Ascending aorta (tissue), 2 donors: ENCODE measurements at regions of chr20 and their contacts with region 1.

Region 1: DNA sequence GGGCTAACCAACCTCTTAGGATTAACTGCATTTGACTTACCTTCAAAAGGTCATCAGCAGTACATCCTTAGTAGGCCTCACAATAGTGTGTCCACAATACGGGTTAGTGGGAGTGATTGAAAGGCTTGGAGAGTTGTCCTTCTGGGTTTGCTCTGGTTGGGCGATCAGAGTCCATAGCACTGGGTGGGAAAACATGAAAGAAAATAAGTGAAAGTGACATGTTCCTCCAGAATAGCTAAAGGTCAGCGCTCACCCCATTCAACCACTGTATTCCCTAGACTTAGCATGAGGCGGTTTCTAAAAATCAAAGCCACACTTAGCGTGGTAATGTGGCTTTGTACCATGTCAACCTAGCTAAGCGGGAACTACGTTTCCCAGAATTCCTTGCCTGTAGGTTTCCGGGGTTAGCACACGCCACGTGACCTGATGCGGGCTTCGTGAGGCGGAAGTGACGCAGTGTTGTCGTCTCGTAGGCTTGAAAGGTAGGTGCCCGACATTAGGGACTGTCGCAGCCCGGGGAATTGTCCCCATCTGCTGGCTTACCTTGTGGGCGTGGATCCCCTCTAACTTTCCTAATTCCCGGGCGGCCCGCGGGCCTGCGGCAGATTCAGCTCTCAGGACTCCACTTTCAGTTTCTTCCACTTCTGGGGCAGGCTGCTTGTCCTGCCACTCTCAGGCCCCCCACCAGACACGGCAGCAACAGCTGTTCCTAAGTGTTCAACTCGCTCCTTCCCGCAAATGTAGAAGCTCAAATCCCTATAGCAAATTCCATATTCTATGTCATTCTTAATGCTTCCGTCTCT is 19.8 kb upstream of the SCP2D1 start:
- DNase-seq: peak; percentile 71 to 94
- H3K4me3 ChIP-seq: peak overlapping the region; percentile 63 to 79
- H3K27ac ChIP-seq: peak overlapping the region; percentile 78 to 80
- H3K4me1 ChIP-seq: peaks cover 0 to 3% of the 10 kb centered on the region in 2 donors
- H3K27me3 ChIP-seq: no peaks in the 10 kb centered on the region
- CTCF ChIP-seq: peak in 1 of 3 experiments; percentile 17

Region 2: DNA sequence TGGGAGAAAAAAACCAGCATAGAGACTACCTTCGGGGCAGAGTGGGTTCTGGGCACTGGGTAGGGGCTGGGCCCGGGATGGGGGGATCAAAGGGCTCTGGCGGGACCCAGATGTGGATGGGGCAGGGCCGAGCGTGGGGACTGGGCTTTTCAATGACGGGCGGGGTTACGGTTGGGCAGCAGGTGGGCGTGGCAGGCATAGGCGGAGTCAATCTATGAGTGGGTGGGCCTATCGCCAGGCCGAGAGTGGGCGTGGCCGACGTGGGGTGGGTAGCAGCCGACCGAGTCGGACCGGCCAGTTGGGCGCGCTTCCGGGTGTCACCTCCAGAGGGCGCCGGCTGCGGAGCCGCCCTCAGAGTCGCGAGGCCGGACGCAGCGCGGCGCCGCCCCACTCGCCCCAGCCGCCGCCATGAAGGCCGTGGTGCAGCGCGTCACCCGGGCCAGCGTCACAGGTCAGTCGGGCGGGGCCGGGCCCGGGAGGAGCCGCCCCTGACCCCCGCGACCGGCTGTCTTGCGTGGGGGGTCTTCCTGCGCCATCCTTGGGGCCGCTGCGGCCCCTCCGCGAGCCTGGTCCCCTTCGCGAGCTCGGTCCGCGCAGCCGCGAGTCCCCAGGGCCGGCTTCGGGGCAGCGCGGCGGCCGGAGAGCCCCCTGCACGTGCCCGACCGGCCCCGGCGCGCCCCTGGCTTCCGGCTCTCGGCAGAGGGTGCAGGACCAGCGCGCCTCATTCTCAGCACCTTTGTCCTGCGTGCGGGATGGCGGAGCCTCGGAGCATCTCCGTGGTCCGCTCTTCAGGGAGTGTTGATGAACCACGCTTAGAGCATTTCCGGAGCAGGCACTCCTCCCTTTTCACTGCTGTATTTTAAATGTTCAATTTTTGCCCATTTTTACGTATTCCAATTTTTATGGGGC is 205.9 kb before region 1 on chr20 and contains the start of gene DTD1:
- intact Hi-C with region 1: loop called (anchors 2 kb)
- DNase-seq: peak; percentile 67 to 97
- H3K4me3 ChIP-seq: peak within 1 kb of the TSS; percentile 83 to 98
- H3K27ac ChIP-seq: peak within 1 kb of the TSS; percentile 75 to 83
- H3K4me1 ChIP-seq: peaks cover 0 to 15% of the 10 kb centered on the region in 2 donors
- H3K27me3 ChIP-seq: no peaks in the 10 kb centered on the region
- CTCF ChIP-seq: peak; percentile 65 to 67 (median 66)
- total RNA-seq, gene DTD1: 34.9 TPM

Region 3: DNA sequence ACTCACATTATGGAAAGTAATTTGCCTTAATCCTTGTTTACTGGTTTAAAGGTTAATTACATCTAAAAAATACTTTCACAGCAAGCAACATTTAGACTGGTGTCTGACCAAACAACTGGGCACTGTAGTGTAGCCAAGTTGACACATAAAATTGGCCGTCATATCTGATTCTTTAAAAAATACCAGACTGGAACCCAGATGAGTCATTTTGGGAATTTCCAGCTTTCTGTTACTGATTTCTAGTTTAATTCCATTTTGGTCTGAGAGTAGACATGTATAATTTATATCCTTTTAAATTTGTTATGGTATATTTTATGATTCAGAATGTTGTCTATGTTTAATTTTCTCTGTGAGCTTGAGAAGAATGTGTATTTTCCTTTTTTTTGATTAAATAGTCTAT is 63.8 kb after region 1 on chr20:
- intact Hi-C with region 1: loop called (anchors 5 kb)
- DNase-seq: no peak
- H3K4me3 ChIP-seq: no peak overlapping the region
- H3K27ac ChIP-seq: peak overlapping the region; percentile 83 to 84
- H3K4me1 ChIP-seq: peaks cover 0 to 10% of the 10 kb centered on the region in 2 donors
- H3K27me3 ChIP-seq: no peaks in the 10 kb centered on the region
- CTCF ChIP-seq: no peak

Region 4: DNA sequence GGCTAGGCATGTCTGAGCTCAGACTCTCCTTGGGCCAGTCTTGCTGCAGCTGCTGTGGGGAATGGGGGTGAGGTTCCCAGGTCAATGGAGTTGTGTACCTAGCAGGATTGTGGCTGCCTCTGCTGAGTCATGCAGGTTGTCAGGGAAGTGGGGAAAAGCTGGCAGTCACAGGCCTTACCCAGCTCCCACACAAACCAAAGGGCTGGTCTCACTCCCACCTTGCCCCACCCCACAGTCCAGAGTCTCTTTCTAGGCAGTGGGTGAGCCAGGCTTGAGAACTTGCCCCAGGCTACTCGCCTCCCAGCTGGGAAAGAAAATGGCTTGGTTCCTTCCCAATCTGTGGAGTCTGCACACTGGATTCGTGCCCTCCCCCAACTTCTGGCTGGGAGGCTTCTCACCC is 85.4 kb after region 1 on chr20:
- intact Hi-C with region 1: no loop called
- DNase-seq: no peak
- H3K4me3 ChIP-seq: no peak overlapping the region
- H3K27ac ChIP-seq: no peak overlapping the region
- H3K4me1 ChIP-seq: no peaks in the 10 kb centered on the region
- H3K27me3 ChIP-seq: no peaks in the 10 kb centered on the region
- CTCF ChIP-seq: no peak